ENCODE measurements at regions of chr9 and their contacts with region 1.

Region 1: DNA sequence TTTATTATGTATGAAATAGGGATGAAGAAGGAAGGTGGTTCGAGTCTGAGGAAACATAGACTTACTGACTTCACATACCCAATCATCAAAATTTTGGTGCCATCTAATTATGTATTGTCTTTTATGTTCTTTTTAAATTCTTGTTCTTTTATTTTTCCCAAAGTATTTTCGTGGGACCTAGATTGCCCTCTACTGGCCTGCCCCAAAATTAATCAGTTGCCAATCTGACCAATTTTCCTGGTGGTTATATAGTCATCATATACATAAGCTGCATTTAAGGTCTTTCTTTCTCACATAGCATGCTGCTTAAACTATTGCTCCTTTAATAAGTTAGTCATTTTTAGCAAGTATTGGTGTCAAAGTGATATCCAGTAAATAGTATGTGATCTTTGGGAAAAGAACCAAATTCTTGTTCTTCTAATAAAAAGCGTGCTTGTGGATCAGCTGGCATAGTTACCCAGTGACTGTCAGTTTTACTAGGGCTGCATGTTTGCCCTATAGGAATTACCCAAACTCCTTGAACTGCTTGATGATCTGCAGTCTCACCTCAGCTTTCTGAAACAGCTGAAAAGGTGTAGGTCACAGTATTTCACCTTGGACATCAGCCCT is 223.5 kb downstream of the SH3GL2 start:
- DNase-seq: no peak
- ATAC-seq: no peak
- H3K4me3 Mint-ChIP-seq: no peak overlapping the region
- H3K27ac Mint-ChIP-seq: no peak overlapping the region
- H3K4me1 Mint-ChIP-seq: no peaks in the 10 kb centered on the region
- H3K27me3 Mint-ChIP-seq: no peaks in the 10 kb centered on the region
- CTCF ChIP-seq: no peak

Region 2: DNA sequence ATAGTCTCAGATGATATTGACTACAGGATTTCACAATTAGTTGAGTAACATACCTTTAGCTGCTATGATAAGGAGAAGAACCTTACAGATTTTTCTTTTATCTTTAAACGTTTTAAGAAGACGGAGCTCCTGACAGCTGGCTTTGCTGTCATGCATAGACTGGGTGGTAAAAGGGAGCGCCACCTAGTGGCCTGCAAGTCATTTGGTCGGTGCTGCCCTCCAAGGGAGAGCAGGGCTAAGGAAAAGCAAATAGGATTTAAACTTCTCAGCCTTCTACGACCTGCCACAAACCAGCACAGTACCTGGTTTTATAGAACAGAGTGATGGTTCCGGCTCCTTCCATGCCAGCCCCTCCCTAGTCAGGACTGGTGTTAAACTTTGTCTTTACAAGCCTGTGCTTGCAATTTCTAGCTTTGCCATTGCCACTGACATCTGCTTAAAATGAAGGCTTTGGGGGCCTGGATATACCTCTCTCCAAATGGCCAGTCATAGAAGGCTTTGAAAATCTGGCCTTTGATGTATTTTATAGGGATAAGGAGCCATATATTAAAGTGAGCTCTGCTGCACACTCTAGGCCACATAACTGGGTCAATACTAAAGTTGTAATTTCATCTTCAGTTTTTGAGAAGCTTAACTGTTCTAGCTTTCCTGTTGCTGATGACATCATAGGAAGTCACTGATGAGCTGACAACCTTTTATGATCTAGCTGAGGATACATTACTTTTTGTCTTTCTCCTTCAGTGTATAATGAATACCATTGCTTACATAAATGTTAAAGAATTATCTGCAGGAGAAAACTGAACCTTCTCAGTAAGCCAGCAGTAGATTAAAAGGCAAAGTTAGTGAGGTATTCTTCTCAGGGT is 640.5 kb after region 1 on chr9:
- CTCF ChIA-PET with region 1: no interaction called
- POLR2A ChIA-PET with region 1: no interaction called
- intact Hi-C with region 1: loop called (anchors 10 kb)
- DNase-seq: no peak
- ATAC-seq: peak; percentile 45
- H3K4me3 Mint-ChIP-seq: no peak overlapping the region
- H3K27ac Mint-ChIP-seq: no peak overlapping the region
- H3K4me1 Mint-ChIP-seq: no peaks in the 10 kb centered on the region
- H3K27me3 Mint-ChIP-seq: peaks cover 11% of the 10 kb centered on the region
- CTCF ChIP-seq: no peak

Region 3: GRCh38 chr9:18834740-18835361 is 1032.5 kb after region 1 on chr9:
- CTCF ChIA-PET with region 1: no interaction called
- POLR2A ChIA-PET with region 1: no interaction called
- intact Hi-C with region 1: no loop called
- DNase-seq: no peak
- ATAC-seq: no peak
- H3K4me3 Mint-ChIP-seq: no peak overlapping the region
- H3K27ac Mint-ChIP-seq: no peak overlapping the region
- H3K4me1 Mint-ChIP-seq: no peaks in the 10 kb centered on the region
- H3K27me3 Mint-ChIP-seq: no peaks in the 10 kb centered on the region
- CTCF ChIP-seq: no peak

Measured in activated B cell treated with CpG ODN at 0.5 μM for 24 hours (primary cell).